ENCODE measurements at regions of chr20 and their contacts with region 1.

Region 1: DNA sequence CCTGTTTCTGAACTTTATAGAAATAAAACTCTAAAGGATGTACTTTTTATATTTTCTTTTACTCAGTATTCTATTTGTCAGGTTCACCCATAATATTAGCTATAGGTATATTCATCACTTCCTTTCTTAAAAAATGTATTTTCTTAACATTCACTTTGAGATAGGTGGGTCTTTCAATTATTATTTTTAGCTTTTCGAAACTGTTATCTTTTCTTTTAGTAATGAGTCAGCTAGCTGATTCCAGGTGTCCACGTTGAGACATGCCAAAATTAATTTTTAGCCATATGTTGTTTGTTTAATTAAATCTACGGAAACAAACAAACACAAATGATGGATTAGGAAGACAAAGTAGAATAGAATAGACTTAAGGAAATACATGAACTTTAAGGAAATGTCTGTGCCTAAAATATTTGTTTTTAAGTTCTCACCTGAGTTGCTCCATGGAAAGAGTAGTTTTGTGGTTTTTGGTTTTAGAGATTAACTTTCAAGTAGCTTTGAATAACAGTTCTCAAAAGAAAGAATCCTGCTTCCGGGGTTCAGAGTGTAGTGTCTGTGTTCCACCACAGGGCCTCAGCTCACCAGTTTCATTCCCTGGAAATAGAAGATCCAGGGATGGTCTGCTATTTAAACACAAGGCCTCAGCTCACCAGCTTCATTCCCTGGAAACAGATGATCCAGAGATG is 435.0 kb downstream of the HAO1 start:
- DNase-seq: no peak

Region 2: DNA sequence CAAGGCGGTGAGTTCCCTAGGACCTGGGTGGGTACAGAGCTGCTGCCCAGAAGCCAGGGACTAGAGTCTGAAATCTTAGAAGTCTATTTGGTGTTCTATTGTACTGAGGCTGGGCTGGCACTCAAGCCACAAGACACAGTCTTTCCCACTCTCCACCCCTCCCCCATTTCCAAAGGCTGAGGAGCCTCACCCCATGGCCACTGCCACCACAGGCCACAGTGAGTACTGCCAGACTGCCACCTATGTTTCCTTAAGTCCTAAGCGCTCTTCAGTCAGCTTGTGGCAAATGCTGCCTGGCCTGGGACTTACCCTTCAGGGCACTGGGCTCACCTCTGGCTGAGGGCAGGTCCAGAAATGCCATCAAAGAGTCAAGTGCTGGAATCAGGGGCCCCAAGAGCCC is 34.4 kb before region 1 on chr20:
- intact Hi-C with region 1: no loop called
- DNase-seq: no peak

Region 3: DNA sequence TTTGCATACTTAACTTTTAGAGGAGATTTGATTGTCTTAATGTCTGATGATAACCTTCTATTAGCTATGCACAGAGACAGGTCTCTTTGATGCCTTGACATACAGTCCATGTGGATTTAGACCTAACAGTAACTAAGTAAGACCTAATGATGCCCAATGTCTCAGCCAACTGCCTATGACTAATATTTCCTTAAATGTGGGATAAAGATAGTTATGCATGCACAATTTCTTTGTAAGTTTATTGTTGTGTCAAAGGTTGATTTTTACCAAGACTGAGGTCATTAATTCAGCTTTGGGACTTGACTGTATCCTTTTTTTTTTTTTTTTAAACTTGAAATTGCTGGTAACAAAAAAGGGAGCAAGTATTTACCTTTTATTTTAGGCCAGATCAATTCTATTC is 15.0 kb before region 1 on chr20:
- intact Hi-C with region 1: loop called in 1 of 2 experiments (anchors 1 kb)
- DNase-seq: no peak

Region 4: DNA sequence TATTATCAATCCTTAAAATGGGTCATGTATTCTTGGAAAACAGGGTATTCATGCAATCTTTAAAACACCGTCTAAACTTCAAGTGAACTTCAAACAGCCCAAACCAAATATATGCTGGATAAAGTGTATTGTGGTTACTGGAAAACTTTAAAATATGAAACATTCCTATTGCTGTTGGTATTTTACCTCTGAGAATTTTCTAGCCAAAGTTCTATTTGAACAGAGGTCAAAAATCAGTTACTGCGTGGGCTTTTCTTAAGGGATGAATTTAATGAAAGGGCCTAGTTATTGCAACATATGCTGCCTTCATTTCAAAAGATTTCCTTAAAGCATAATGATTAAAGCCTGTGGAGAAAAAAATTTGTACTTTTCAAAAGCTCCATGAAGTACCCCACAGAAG is 1062.8 kb after region 1 on chr20:
- intact Hi-C with region 1: loop called in 1 of 2 experiments (anchors 5 kb)
- DNase-seq: no peak

Measured in posterior vena cava (tissue), 2 donors.